Activated CD8-positive, alpha-beta T cell treated with anti-CD3 and anti-CD28 coated beads for 36 hours (primary cell): ENCODE measurements at regions of chr1 and their contacts with region 1.

Region 1: GRCh38 chr1:234326497-234327366 is 46.5 kb upstream of the COA6 start:
- DNase-seq: peak; percentile 75
- ATAC-seq: peak; percentile 90
- H3K4me3 Mint-ChIP-seq: peak overlapping the region; percentile 59
- H3K27ac Mint-ChIP-seq: no peak overlapping the region
- H3K4me1 Mint-ChIP-seq: peaks cover 6% of the 10 kb centered on the region
- H3K27me3 Mint-ChIP-seq: peaks cover 43% of the 10 kb centered on the region
- CTCF ChIP-seq: peak; percentile 74

Region 2: DNA sequence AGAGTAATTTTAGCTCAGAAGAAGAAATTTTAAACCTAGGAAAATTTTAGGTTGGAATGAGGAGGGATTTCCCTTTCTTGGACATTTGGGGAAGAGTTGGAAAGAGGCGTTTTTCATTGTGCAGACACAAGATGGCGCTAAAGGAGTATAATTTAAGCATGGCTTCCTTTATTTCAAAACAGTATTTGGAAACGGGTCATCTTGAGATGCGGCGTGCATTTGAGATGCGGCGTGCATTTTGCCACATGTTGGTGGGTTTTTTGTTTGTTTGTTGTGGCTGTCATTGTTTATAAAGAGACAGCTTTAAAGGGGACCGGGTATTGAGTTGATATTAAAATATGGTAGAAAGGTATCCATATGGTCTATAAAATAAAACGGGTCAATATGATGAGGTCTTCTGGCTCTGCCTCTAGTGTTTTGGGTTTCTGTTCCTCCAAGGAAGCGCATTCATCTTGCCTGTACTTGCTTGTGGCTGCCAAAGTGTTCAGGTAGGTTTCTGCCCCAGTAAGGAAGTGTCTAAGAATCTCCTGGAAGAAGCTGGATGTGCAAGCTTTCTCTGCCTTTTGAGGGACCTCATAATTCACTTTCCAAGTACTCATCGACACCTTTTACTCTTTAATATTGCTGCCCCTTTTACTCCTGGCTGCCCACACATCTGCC is 212.0 kb before region 1 on chr1:
- CTCF ChIA-PET with region 1: interaction called, 13 read pairs
- POLR2A ChIA-PET with region 1: no interaction called
- intact Hi-C with region 1: loop called (anchors 5 kb)
- DNase-seq: peak; percentile 38
- ATAC-seq: peak; percentile 58
- H3K4me3 Mint-ChIP-seq: peak overlapping the region; percentile 14
- H3K27ac Mint-ChIP-seq: no peak overlapping the region
- H3K4me1 Mint-ChIP-seq: peaks cover 4% of the 10 kb centered on the region
- H3K27me3 Mint-ChIP-seq: peaks cover 14% of the 10 kb centered on the region
- CTCF ChIP-seq: peak; percentile 81

Region 3: GRCh38 chr1:234212764-234213657 is 113.7 kb before region 1 on chr1:
- CTCF ChIA-PET with region 1: interaction called, 13 read pairs
- POLR2A ChIA-PET with region 1: no interaction called
- intact Hi-C with region 1: no loop called
- DNase-seq: peak; percentile 53
- ATAC-seq: peak; percentile 66
- H3K4me3 Mint-ChIP-seq: no peak overlapping the region
- H3K27ac Mint-ChIP-seq: no peak overlapping the region
- H3K4me1 Mint-ChIP-seq: peaks cover 27% of the 10 kb centered on the region
- H3K27me3 Mint-ChIP-seq: peaks cover 47% of the 10 kb centered on the region
- CTCF ChIP-seq: peak; percentile 70

Region 4: GRCh38 chr1:234342774-234343173 is 16.0 kb after region 1 on chr1:
- CTCF ChIA-PET with region 1: interaction called, 23 read pairs
- POLR2A ChIA-PET with region 1: no interaction called
- intact Hi-C with region 1: no loop called
- DNase-seq: no peak
- ATAC-seq: no peak
- H3K4me3 Mint-ChIP-seq: no peak overlapping the region
- H3K27ac Mint-ChIP-seq: no peak overlapping the region
- H3K4me1 Mint-ChIP-seq: no peaks in the 10 kb centered on the region
- H3K27me3 Mint-ChIP-seq: peaks cover 3% of the 10 kb centered on the region
- CTCF ChIP-seq: no peak

Region 5: DNA sequence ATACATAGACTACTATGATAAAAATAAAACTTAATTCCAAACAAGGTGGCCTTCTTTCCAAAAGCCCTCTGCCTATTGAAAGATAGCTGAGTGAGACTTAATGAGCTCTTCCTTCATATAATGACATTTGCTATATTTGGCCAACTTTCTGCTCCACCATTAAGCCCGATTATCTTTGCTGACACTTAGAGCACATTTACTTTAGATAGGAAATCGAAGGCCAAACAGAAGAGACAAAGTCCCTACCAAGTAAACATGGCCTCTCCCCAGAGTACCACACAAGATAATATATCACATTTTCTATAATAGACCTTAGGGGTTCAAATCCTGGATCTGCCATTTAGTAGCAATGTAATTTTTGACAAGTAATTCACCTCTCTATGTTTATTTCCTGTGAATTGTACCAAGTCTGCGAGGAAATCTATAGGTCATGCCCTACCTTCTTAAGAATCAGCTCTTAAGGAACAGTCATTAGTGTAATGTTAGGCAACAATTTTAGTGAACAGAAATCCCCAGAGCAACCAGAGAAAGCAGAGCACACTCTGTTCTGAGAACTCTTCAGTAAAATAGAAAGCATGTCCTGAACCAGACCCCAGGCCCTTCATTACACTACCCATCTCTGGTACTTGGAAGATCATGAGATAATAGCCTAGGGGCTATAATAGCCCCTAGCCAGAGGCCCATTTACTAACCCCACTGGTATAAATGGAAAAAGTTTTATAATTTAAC is 29.2 kb after region 1 on chr1:
- CTCF ChIA-PET with region 1: interaction called, 13 read pairs
- POLR2A ChIA-PET with region 1: no interaction called
- intact Hi-C with region 1: no loop called
- DNase-seq: no peak
- ATAC-seq: peak; percentile 75
- H3K4me3 Mint-ChIP-seq: peak overlapping the region; percentile 83
- H3K27ac Mint-ChIP-seq: peak overlapping the region; percentile 89
- H3K4me1 Mint-ChIP-seq: peaks cover 11% of the 10 kb centered on the region
- H3K27me3 Mint-ChIP-seq: peaks cover under 1% of the 10 kb centered on the region
- CTCF ChIP-seq: no peak